ENCODE measurements at regions of chr11 and their contacts with region 1.

Region 1: DNA sequence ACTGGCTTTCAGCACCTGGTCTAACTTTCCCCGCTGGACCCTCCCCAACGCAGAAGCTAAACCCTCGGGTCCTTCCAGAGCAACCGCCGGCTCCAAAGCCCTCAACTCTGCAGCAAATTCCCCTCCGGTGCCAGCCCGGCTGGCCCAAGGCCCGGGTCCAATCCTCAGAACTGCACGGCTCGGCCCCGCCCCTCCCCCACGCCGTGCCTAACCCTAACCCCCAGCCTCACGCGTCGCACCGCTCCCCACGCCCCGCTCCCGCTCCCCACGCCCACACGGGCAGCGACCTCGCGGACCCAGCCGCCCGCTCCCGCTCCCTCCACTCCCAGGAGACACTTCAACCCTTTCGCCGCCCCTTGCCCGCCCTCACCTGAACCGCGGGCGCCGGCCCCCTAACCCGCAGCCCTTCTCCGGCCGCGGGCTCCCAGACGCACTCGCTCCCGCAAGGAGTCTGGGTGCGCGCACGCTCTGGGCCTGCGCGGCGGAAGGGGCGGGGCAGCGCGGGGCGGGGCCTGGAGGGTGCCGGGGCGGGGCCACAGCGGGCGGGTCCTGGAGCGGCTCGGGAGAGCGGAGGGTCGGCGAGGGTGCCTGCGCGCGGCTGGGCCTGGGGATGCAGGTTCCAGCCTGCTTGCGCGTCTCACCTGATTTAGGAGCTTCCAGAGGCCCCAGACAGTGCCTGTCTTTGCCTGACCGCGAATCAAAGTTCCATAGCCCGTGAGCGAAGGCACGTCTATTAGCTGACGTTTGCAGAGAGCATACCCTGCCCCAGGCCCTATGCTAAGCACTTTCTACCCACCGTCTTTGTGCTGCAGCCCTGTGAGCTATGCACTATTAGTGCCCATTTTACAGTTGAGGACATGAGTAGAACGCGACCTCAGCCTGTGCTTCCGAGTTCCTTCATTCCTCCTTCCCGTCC is at the start of gene NFRKB:
- DNase-seq: peak; percentile 94 to 98
- H3K4me3 ChIP-seq: peak within 1 kb of the TSS; percentile 86
- H3K4me3 Mint-ChIP-seq: peak within 1 kb of the TSS; percentile 84
- H3K27ac Mint-ChIP-seq: peak within 1 kb of the TSS; percentile 80
- H3K4me1 ChIP-seq: peaks cover 14% of the 10 kb centered on the region
- H3K4me1 Mint-ChIP-seq: peaks cover 13% of the 10 kb centered on the region
- H3K27me3 ChIP-seq: no peaks in the 10 kb centered on the region
- H3K27me3 Mint-ChIP-seq: no peaks in the 10 kb centered on the region
- CTCF ChIP-seq: no peak
- total RNA-seq, gene NFRKB: 101 and 104 TPM in 2 replicates

Region 2: GRCh38 chr11:129871914-129872313 is 23.5 kb before region 1 on chr11:
- CTCF ChIA-PET with region 1: no interaction called
- POLR2A ChIA-PET with region 1: no interaction called
- intact Hi-C with region 1: loop called (anchors 1 kb)
- DNase-seq: no peak
- H3K4me3 ChIP-seq: no peak overlapping the region
- H3K4me3 Mint-ChIP-seq: no peak overlapping the region
- H3K27ac Mint-ChIP-seq: no peak overlapping the region
- H3K4me1 ChIP-seq: peaks cover 6% of the 10 kb centered on the region
- H3K4me1 Mint-ChIP-seq: peaks cover 1% of the 10 kb centered on the region
- H3K27me3 ChIP-seq: no peaks in the 10 kb centered on the region
- H3K27me3 Mint-ChIP-seq: no peaks in the 10 kb centered on the region
- CTCF ChIP-seq: no peak

Measured in Caco-2 (cell line).